ENCODE measurements at regions of chr3 and their contacts with region 1.

Region 1: DNA sequence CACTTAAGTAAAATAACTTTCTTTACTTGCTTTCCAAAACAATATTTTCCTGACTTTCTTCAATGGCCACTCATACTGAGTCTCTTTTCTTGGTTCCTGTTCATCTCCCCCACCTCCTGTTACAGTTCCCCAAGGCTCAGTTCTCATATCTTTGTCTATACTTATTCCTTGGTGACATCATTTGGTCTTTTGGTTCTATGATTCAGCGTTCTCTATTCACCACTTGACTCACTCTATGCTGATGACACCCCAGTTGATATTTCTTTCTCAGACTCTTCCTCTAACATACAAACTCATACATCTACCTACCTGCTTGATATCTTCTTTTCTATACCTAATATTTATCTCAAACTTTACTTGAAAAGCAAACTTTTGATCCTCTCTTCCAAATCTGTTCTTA is 85.0 kb upstream of the P3H2 start:
- DNase-seq: no peak
- H3K4me3 Mint-ChIP-seq: no peak overlapping the region
- H3K27ac Mint-ChIP-seq: no peak overlapping the region
- H3K4me1 Mint-ChIP-seq: no peaks in the 10 kb centered on the region
- H3K27me3 Mint-ChIP-seq: no peaks in the 10 kb centered on the region
- CTCF ChIP-seq: no peak

Region 2: DNA sequence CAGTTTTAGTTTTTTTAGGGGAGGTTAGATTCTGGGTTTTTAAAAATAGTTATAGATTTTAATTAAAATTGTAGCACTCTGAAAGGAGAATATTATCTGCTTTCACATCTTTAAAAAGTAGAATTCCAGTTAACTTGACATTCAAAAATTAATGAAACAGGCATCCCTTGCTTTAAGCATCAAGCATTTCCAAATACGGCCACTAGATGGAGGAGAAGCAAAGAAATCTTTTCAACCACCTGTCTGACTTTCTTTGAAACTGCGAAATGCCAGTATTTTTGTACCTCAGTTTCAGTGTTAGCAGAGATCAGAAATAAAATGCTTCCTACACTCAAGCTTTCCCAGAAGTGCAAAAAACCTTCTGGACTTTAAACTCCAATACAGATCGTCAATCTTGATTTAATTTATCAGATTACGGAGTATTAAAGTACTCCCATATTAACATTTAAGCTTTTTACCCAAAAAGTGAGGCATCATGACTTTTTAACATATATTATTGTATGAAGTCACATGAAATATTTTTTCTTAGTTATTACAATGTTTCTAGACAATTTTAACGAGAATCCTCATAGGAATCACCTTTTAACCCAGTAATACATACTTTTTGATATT is 238.4 kb before region 1 on chr3:
- CTCF ChIA-PET with region 1: no interaction called
- intact Hi-C with region 1: loop called (anchors 1 kb)
- DNase-seq: peak; percentile 69
- H3K4me3 Mint-ChIP-seq: no peak overlapping the region
- H3K27ac Mint-ChIP-seq: no peak overlapping the region
- H3K4me1 Mint-ChIP-seq: no peaks in the 10 kb centered on the region
- H3K27me3 Mint-ChIP-seq: no peaks in the 10 kb centered on the region
- CTCF ChIP-seq: peak; percentile 89

Measured in Calu3 (cell line).